ENCODE measurements at regions of chr14 and their contacts with region 1.

Region 1: GRCh38 chr14:35404449-35405303 is at the start of gene NFKBIA:
- DNase-seq: peak; percentile 95
- H3K4me3 Mint-ChIP-seq: peak within 1 kb of the TSS; percentile 100
- H3K27ac Mint-ChIP-seq: peak within 1 kb of the TSS; percentile 99
- H3K4me1 Mint-ChIP-seq: peaks cover 38% of the 10 kb centered on the region
- H3K27me3 Mint-ChIP-seq: no peaks in the 10 kb centered on the region
- total RNA-seq, gene NFKBIA: 591 and 599 TPM in 2 replicates

Region 2: DNA sequence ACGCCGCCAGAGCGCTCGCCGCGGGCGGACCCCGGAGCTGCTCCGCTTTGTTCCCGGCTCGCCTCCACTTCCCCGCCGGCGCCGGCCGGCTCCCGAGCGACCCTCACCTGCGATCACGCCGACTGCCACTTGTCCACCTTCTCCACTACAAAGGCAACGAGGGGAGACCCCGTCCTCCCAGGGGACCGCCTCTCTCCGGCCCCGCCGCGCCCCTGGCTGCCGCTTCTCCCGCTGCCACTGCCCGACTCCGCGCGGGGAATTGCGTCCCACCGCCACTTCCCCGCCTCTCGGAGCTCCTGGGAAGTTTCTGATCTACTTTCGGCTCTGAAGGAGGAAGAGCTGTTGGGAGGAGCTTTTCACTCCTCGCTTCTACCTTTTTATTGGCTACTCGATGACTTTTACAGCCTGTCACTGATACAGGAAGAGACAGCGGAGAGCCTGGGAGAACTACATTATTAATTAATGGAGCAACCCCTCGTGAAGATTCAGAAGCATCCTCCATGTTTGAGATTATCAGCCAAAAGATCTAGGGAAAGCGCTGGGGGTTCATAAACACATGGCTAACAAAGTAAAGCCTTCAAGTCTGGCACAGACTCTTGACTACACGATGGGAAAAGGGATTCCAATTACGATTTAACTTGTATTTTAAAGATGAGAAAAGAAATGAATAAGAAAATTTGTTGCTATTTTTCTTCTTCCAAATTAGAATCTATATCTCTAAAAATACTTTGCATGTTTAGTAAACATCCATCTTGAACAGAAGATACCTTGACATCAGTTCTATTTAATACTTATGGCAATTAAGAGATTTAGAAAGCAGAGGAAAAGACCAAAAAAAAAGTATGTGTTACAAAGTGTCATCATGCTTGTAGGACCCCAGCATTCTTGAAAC is 529.4 kb before region 1 on chr14 and contains the start of gene BAZ1A:
- intact Hi-C with region 1: loop called (anchors 2 kb)
- DNase-seq: peak; percentile 41
- H3K4me3 Mint-ChIP-seq: peak within 1 kb of the TSS; percentile 100
- H3K27ac Mint-ChIP-seq: peak within 1 kb of the TSS; percentile 100
- H3K4me1 Mint-ChIP-seq: peaks cover 34% of the 10 kb centered on the region
- H3K27me3 Mint-ChIP-seq: peaks cover 2% of the 10 kb centered on the region
- total RNA-seq, gene BAZ1A: 75.0 and 83.7 TPM in 2 replicates

Region 3: GRCh38 chr14:35121887-35122695 is 282.6 kb before region 1 on chr14 and contains the starts of genes PPP2R3C and PRORP:
- intact Hi-C with region 1: loop called (anchors 1 kb)
- DNase-seq: peak; percentile 88
- H3K4me3 Mint-ChIP-seq: peak within 1 kb of the TSS; percentile 97
- H3K27ac Mint-ChIP-seq: peak within 1 kb of the TSS; percentile 100
- H3K4me1 Mint-ChIP-seq: peaks cover 61% of the 10 kb centered on the region
- H3K27me3 Mint-ChIP-seq: no peaks in the 10 kb centered on the region
- total RNA-seq, gene PPP2R3C: 48.2 and 52.4 TPM in 2 replicates
- total RNA-seq, gene PRORP: 34.1 and 38.0 TPM in 2 replicates

Region 4: DNA sequence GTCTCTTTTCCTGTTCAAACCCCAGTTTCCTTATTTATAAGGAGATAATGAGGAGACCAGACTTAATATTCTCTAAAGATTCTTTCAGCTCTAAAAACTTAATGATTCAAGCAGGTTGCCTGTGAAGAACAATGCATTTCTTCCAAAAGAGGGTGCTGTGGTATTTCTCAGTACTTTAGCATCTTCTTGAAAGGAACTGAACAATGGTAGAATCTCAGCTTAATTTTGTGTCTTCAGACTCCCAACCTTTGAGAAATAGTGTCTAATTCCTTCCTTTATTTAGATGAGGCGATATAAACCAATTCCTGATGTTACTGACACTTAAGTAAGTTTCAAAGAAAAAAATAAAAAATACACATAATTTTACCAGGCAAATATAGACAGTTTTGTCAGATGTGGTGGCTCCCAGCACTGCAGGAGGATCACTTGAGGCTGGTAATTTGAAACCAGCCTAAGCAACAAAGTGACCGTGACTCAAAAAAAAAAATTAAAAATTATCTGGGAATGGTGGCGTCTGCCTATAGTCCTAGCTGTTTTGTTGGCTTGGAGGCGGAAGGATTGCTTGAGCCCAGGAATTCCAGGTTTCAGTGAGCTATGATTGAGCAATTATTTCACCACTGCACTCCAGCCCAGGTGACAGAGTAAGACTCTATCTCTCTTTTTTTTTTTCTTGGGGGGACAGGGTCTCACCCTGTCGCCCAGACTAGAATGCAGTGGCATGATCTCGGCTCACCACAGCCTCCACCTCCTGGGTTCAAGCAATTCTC is 189.4 kb before region 1 on chr14:
- intact Hi-C with region 1: loop called (anchors 1 kb)
- DNase-seq: no peak
- H3K4me3 Mint-ChIP-seq: no peak overlapping the region
- H3K27ac Mint-ChIP-seq: no peak overlapping the region
- H3K4me1 Mint-ChIP-seq: peaks cover 39% of the 10 kb centered on the region
- H3K27me3 Mint-ChIP-seq: no peaks in the 10 kb centered on the region

Region 5: DNA sequence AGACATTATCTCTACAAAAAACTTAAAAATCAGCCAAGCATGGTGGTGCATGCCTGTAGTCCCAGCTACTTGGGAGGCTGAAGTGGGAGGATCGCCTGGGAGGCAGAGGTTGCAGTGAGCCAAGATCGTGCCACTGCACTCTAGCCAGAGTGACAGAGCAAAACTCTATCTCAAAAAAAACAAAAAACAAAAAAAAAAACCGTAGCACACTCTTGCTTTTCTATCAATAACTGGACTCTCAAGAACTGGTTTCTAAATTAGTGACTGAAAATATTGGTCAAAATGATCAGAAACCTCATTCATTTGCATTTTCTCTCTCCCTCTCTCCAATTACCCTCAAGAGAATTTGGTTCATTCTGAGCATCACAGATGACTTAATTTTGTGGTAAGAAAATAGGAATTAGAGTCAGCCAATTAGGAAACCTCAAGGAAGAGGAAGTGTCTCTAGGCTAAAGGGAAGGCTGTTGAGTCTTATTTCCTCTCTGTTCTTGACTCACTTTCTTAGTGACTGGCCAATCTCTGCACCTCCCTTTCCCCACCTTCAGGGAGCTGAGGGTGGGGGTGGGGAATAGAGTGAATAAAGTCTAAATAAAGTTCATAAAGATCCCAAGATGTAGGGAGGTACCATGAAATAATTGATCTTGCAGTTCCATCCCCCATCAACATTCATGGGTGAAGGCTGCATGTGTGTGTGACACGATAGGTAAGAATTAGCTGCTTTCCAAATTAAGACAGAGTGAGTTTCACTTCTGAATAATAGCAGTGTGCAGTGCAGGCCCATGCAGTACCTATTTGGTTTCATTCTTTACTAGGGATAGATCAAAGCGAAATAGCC is 119.3 kb before region 1 on chr14:
- intact Hi-C with region 1: loop called (anchors 1 kb)
- DNase-seq: peak; percentile 17
- H3K4me3 Mint-ChIP-seq: peak overlapping the region; percentile 53
- H3K27ac Mint-ChIP-seq: peak overlapping the region; percentile 99
- H3K4me1 Mint-ChIP-seq: peaks cover 51% of the 10 kb centered on the region
- H3K27me3 Mint-ChIP-seq: no peaks in the 10 kb centered on the region

Region 6: GRCh38 chr14:35355981-35356841 is 48.5 kb before region 1 on chr14:
- intact Hi-C with region 1: loop called (anchors 1 kb)
- DNase-seq: no peak
- H3K4me3 Mint-ChIP-seq: no peak overlapping the region
- H3K27ac Mint-ChIP-seq: peak overlapping the region; percentile 33
- H3K4me1 Mint-ChIP-seq: peaks cover 16% of the 10 kb centered on the region
- H3K27me3 Mint-ChIP-seq: no peaks in the 10 kb centered on the region

Region 7: DNA sequence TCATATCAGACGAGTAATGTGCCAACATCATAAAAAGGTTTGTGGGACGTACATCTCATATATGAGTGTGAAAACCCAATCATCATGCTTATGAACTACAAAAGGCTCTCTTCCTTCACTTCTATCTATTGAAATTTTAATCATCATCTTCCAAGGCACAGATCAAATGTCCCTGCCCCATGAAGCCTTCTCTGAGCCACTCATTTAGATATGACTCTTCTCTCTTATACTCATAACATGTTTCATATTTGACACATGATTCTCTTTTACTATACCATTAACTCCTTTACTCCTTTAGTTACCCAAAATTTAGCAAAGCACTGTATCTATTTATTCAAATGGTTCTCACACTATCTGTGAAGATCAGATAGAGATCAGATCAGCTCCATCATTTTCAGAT is 382.2 kb after region 1 on chr14:
- intact Hi-C with region 1: no loop called
- DNase-seq: no peak
- H3K4me3 Mint-ChIP-seq: no peak overlapping the region
- H3K27ac Mint-ChIP-seq: no peak overlapping the region
- H3K4me1 Mint-ChIP-seq: peaks cover 19% of the 10 kb centered on the region
- H3K27me3 Mint-ChIP-seq: no peaks in the 10 kb centered on the region